Stomach (tissue), 19 donors: ENCODE measurements at regions of chr4 and their contacts with region 1.

Region 1: DNA sequence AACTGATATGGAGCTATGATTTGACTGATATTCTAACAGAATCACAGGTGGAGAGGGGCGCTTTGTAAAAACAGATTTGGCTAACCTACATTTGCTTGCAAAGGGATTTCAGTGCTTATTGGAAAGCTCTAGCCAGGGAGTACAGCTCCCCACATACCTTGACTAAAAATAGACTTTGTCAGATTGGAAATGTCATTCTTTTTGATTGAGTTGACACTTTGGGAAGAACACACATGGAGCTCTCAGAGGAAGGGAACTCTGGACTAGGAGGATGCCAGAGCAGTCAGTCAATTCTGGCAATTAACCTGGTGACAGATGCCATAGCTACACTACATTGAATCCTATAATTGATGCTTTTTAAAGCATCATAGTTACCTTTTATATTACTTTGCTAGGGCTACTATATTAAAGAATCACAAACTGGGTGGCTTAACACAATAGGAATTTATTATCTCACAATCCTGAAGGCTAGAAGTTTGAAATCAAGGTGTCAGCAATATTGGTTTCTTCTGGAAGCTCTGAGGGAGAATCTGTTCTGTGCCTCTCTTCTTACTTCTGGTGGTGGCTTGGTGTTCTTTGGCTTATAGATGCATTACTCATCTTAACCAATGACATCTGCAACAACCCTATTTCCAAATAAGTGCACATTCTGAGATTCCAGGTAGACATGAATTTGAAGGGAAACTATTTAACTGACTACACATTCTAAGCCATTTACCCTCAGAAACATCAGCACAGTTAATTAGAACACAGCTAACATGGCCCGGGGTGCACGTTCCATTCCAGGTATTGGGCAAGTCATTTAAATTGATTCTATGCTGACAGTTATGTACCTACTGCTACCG is 8.4 kb upstream of the HERC3 start:
- DNase-seq: no peak
- H3K4me3 ChIP-seq: no peak overlapping the region
- H3K27ac ChIP-seq: no peak overlapping the region
- H3K4me1 ChIP-seq: peaks cover 0 to 5% (median 1%) of the 10 kb centered on the region in 4 donors
- H3K27me3 ChIP-seq: no peaks in the 10 kb centered on the region
- CTCF ChIP-seq: no peak
- EP300 ChIP-seq: no peak
- POLR2A ChIP-seq: no peak

Region 2: GRCh38 chr4:88533937-88534750 is 49.7 kb before region 1 on chr4:
- intact Hi-C with region 1: loop called (anchors 10 kb)
- DNase-seq: no peak
- H3K4me3 ChIP-seq: no peak overlapping the region
- H3K27ac ChIP-seq: peak overlapping the region in 1 of 5 donors; percentile 18
- H3K4me1 ChIP-seq: peaks cover 0 to 3% (median 2%) of the 10 kb centered on the region in 4 donors
- H3K27me3 ChIP-seq: no peaks in the 10 kb centered on the region
- CTCF ChIP-seq: no peak
- EP300 ChIP-seq: no peak
- POLR2A ChIP-seq: no peak

Region 3: GRCh38 chr4:88659055-88659889 is 75.4 kb after region 1 on chr4:
- intact Hi-C with region 1: loop called (anchors 10 kb)
- DNase-seq: peak; percentile 64 to 83
- H3K4me3 ChIP-seq: no peak overlapping the region
- H3K27ac ChIP-seq: peak overlapping the region in 4 of 5 donors; percentile 30 to 56 (median 46)
- H3K4me1 ChIP-seq: peaks cover 0 to 20% (median 9%) of the 10 kb centered on the region in 4 donors
- H3K27me3 ChIP-seq: no peaks in the 10 kb centered on the region
- CTCF ChIP-seq: peak in 5 of 7 experiments; percentile 74 to 84 (median 79)
- EP300 ChIP-seq: no peak
- POLR2A ChIP-seq: no peak